ENCODE measurements at regions of chr3 and their contacts with region 1.

Region 1: GRCh38 chr3:78174821-78175220 is 1134.9 kb downstream of the ROBO2 start:
- DNase-seq: no peak
- H3K4me3 ChIP-seq: no peak overlapping the region
- H3K27ac ChIP-seq: no peak overlapping the region
- H3K4me1 ChIP-seq: no peaks in the 10 kb centered on the region
- CTCF ChIP-seq: no peak

Region 2: DNA sequence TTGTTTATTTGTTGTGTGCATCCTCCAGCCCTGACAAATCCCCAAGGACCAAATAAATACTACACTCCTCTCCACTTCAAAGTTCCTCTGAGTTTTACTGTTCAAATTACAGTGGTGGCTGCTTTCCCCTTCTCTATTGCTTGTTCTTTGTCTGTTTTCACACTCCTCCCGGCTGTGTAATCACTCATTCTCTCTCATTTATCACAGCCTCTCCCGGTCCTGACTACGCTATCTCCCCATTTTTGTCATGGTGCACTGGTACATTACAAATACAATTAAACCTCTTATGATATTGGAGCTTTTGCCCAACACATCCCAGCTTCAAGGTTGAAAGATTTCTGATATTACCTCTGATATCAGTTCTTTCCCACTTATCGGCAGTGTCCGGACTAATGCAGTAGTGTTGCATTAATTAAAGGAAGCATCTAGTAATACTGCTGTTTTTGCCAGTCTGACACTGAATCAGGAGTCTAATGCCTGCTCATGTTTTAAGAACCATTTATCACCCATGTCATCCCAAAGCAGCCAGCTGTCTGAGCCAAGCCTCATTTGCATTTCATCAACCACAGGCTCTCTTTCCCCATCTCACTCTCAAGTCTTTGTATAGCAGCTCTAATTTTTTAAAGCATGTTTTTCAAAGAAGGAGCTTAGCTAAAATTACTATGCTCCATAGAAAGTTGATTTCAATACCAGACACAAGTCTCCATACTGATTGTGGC is 394.4 kb before region 1 on chr3:
- CTCF ChIA-PET with region 1: no interaction called
- POLR2A ChIA-PET with region 1: no interaction called
- intact Hi-C with region 1: no loop called
- DNase-seq: no peak
- H3K4me3 ChIP-seq: no peak overlapping the region
- H3K27ac ChIP-seq: no peak overlapping the region
- H3K4me1 ChIP-seq: no peaks in the 10 kb centered on the region
- CTCF ChIP-seq: no peak

Region 3: GRCh38 chr3:77859156-77859555 is 315.7 kb before region 1 on chr3:
- CTCF ChIA-PET with region 1: no interaction called
- POLR2A ChIA-PET with region 1: no interaction called
- intact Hi-C with region 1: loop called (anchors 5 kb)
- DNase-seq: no peak
- H3K4me3 ChIP-seq: no peak overlapping the region
- H3K27ac ChIP-seq: no peak overlapping the region
- H3K4me1 ChIP-seq: no peaks in the 10 kb centered on the region
- CTCF ChIP-seq: no peak